ENCODE measurements at regions of chr4 and their contacts with region 1.

Region 1: DNA sequence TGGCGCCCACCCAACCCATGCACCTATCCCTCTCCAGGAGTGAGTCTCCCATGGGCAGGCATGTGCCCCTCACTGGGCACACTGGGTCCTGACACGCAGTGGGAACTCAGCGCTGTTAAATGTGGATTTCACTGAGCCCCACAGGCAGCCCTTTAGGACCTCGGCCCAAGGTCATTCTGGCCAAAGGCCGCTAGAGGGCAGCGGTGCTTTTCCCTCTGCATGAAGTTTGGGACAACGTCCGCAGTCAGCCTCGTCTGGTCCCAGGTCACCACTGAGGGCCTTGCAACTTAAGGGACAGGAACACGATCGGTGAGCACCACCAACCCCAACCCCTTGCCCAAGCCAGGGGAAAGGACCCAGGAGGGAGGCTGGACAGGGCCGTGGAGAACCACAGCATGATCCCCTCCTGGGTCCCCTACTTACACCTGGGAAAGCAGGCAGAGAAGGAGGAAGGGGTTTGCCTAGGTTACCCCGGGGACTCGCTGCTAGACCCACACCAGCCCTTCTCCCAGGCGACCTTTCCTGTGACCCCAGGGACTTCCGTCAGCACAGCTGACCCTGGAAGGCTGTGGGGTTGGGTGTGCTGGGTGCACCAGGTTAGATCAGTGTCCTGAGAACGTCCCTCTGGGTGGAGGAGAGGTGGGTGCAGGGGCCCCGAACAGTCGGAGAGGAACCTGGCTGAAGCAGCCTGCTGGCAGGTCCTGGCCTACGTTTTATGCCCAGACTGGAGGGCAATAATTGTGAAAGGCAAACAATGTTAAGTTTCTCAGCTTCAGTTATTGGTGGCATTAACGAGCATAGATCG is 24.0 kb downstream of the CYTL1 start:
- DNase-seq: peak; percentile 54
- ATAC-seq: peak; percentile 89
- H3K4me3 ChIP-seq: no peak overlapping the region
- H3K27ac ChIP-seq: no peak overlapping the region
- H3K4me1 ChIP-seq: peaks cover 9 to 20% of the 10 kb centered on the region in 2 experiments; a peak in 3 of 4 replicates
- H3K27me3 ChIP-seq: peaks cover 10% of the 10 kb centered on the region; the same call in 1 of the 2 replicates
- CTCF ChIP-seq: peak; percentile 71 to 96 (median 94)
- POLR2A ChIP-seq: no peak
- RAD21 ChIP-seq: peak; percentile 87

Region 2: DNA sequence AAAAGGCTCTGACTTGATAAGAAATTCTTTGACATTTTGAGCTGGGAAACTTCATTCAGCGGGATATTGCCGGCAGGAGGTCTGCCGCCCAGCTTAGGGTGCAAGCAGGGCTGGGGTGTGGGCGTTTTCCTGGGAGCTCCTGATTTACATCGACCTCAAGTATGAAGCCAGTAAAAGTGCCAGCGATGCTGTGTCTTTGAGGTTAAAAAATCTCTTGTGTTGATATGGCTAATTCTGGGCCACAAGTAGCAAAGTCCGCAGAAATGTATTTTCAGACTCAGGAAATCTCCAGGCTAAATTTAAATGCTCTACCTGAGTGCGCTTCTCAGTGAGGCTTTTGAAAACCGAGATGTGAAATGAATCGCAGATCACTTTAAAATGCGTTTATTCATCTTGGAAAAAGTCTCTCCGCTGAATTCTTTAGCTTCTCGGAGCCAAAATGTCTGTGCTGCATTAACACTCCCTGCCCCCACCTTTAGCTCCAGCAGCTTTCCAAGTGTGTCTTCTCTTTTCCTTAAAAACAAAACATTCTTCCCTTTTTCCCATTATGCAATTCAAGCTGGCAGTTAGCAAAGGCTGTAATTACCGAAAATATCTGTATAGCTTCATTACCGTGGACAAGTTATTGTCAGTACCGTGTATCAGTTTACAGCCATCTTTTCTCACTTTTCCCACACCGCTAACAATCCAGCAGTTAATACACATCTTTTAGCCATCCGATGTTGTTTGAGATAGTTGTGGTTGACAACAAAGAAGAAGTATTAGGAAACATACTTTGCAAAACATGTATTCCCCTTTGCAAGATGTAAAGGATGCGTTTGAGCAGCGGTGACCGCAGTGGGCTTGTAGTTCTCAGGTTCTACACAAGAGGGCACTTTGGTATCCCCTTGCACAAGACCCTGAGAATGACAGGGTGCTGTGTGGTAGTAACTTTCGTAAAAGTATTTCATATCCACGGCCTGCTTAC is 317.5 kb before region 1 on chr4:
- CTCF ChIA-PET with region 1: no interaction called
- POLR2A ChIA-PET with region 1: no interaction called
- RAD21 ChIA-PET with region 1: no interaction called
- intact Hi-C with region 1: loop called (anchors 10 kb)
- DNase-seq: peak; percentile 36
- ATAC-seq: peak; percentile 83
- H3K4me3 ChIP-seq: no peak overlapping the region
- H3K27ac ChIP-seq: no peak overlapping the region
- H3K4me1 ChIP-seq: peaks cover 5 to 11% of the 10 kb centered on the region in 2 experiments
- H3K27me3 ChIP-seq: no peaks in the 10 kb centered on the region
- CTCF ChIP-seq: peak; percentile 56 to 84 (median 80); a peak in 5 of 6 replicates
- POLR2A ChIP-seq: no peak
- RAD21 ChIP-seq: peak; percentile 78

Region 3: GRCh38 chr4:4714331-4714730 is 281.0 kb before region 1 on chr4:
- CTCF ChIA-PET with region 1: no interaction called
- POLR2A ChIA-PET with region 1: no interaction called
- RAD21 ChIA-PET with region 1: no interaction called
- intact Hi-C with region 1: no loop called
- DNase-seq: no peak
- ATAC-seq: no peak
- H3K4me3 ChIP-seq: no peak overlapping the region
- H3K27ac ChIP-seq: no peak overlapping the region
- H3K4me1 ChIP-seq: peaks cover 17 to 43% of the 10 kb centered on the region in 2 experiments
- H3K27me3 ChIP-seq: no peaks in the 10 kb centered on the region
- CTCF ChIP-seq: no peak
- POLR2A ChIP-seq: no peak
- RAD21 ChIP-seq: no peak

Region 4: GRCh38 chr4:5378002-5378401 is 382.7 kb after region 1 on chr4:
- CTCF ChIA-PET with region 1: no interaction called
- POLR2A ChIA-PET with region 1: no interaction called
- RAD21 ChIA-PET with region 1: no interaction called
- intact Hi-C with region 1: loop called (anchors 5 kb)
- DNase-seq: peak; percentile 13
- ATAC-seq: peak; percentile 72
- H3K4me3 ChIP-seq: no peak overlapping the region
- H3K27ac ChIP-seq: no peak overlapping the region
- H3K4me1 ChIP-seq: no peaks in the 10 kb centered on the region
- H3K27me3 ChIP-seq: peaks cover 15% of the 10 kb centered on the region; the same call in 1 of the 2 replicates
- CTCF ChIP-seq: peak; percentile 48 to 61 (median 53); a peak in 5 of 6 replicates
- POLR2A ChIP-seq: no peak
- RAD21 ChIP-seq: peak; percentile 70

Region 5: GRCh38 chr4:5790546-5790857 is 795.2 kb after region 1 on chr4:
- CTCF ChIA-PET with region 1: no interaction called
- POLR2A ChIA-PET with region 1: no interaction called
- RAD21 ChIA-PET with region 1: no interaction called
- intact Hi-C with region 1: loop called (anchors 1 kb)
- DNase-seq: no peak
- ATAC-seq: no peak
- H3K4me3 ChIP-seq: no peak overlapping the region
- H3K27ac ChIP-seq: no peak overlapping the region
- H3K4me1 ChIP-seq: no peaks in the 10 kb centered on the region
- H3K27me3 ChIP-seq: peaks cover 8% of the 10 kb centered on the region; the same call in 1 of the 2 replicates
- CTCF ChIP-seq: no peak
- POLR2A ChIP-seq: no peak
- RAD21 ChIP-seq: no peak